Breast epithelium (tissue), 4 donors: ENCODE measurements at regions of chr17 and their contacts with region 1.

Region 1: DNA sequence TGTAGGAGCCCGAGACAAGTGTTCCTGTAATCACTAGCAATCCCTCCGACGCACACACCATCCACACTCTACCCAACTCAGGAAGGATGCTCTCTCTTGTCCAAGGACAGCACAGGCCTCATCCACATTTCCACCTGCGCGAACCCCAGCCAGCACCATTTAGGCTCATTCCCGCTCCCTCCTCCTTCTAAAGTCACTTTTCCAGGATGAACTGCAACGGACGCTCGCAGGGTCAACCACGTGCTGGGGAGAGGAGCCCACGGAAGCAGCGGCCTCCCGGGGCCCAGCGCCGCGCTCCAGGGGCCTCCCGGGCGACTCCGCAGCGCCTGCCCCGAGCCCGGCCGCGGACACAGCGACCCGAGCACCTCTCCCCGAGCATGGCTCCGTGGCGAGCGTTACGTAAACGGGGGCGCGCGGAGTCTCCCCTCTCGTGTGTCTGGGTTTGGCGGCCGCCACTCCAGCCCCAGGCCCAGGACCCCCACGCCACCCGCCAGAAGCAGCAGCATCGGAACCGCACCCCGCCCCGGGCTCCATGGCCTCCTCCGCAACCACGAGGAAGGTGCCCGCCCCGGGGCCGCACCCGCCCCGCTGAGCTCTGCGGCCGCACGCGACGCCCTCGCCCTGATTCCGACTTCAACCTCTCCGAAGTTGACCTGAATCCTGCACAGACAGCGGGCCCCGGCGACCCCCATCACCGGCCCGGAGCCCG is 698 bp downstream of the USP36 start:
- DNase-seq: peak in 1 of 2 donors; percentile 33
- H3K4me3 ChIP-seq: peak overlapping the region; percentile 90 to 98 (median 95)
- H3K27ac ChIP-seq: peak overlapping the region; percentile 99 to 100
- H3K4me1 ChIP-seq: peaks cover 0 to 6% of the 10 kb centered on the region in 2 donors
- H3K27me3 ChIP-seq: no peaks in the 10 kb centered on the region
- CTCF ChIP-seq: no peak
- POLR2A ChIP-seq: no peak

Region 2: DNA sequence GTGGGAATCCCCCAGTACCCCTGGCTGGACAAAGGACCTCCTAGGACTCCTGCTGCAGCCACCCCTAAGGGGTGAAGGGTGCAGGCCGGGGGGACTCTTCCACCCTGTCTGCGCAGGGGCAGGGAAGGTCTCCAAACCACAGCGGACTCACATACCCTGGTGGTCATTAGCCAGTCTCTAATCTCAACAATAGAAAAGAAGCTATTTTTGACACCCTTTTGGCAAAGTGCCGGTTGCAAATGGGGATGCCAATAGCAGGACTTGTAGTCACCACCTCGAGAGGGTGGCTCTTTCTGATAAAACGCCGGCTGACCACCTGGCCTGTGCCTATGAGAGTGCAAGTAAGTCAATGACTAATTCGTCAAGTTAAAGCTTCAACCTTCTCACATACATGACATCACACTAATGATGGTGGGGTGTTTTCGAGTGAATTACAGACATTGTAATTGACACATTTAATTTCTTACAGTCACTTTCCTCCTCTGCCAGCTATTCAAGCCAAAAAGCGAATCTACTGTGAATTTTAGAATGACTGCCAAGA is 239.7 kb before region 1 on chr17:
- intact Hi-C with region 1: loop called (anchors 10 kb)
- DNase-seq: no peak
- H3K4me3 ChIP-seq: no peak overlapping the region
- H3K27ac ChIP-seq: no peak overlapping the region
- H3K4me1 ChIP-seq: no peaks in the 10 kb centered on the region
- H3K27me3 ChIP-seq: no peaks in the 10 kb centered on the region
- CTCF ChIP-seq: no peak
- POLR2A ChIP-seq: no peak

Region 3: DNA sequence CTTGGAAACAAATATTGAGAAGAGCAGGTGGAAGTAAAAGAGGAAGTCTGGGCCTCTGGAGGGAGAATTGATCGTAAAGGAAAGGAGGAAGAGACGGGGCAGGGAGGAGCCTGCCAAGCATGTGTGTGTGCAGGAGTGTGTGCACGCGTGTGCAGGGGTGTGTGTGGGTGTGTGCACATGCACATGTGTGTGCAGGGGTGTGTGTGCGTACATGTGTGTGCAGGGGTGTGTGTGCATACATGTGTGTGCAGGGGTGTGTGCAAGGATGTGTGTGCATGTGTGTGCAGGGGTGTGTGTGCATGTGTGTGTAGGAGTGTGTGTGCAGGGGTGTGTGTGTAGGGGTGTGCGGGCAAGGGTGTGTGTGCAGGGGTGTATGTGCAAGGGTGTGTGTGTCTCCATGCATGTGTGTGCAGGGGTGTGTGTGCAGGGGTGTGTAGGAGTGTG is 53.0 kb after region 1 on chr17:
- intact Hi-C with region 1: loop called (anchors 1 kb)
- DNase-seq: no peak
- H3K4me3 ChIP-seq: no peak overlapping the region
- H3K27ac ChIP-seq: no peak overlapping the region
- H3K4me1 ChIP-seq: peaks cover 4 to 8% of the 10 kb centered on the region in 2 donors
- H3K27me3 ChIP-seq: no peaks in the 10 kb centered on the region
- CTCF ChIP-seq: no peak
- POLR2A ChIP-seq: no peak